Calu3 (cell line): ENCODE measurements at regions of chr3 and their contacts with region 1.

Region 1: DNA sequence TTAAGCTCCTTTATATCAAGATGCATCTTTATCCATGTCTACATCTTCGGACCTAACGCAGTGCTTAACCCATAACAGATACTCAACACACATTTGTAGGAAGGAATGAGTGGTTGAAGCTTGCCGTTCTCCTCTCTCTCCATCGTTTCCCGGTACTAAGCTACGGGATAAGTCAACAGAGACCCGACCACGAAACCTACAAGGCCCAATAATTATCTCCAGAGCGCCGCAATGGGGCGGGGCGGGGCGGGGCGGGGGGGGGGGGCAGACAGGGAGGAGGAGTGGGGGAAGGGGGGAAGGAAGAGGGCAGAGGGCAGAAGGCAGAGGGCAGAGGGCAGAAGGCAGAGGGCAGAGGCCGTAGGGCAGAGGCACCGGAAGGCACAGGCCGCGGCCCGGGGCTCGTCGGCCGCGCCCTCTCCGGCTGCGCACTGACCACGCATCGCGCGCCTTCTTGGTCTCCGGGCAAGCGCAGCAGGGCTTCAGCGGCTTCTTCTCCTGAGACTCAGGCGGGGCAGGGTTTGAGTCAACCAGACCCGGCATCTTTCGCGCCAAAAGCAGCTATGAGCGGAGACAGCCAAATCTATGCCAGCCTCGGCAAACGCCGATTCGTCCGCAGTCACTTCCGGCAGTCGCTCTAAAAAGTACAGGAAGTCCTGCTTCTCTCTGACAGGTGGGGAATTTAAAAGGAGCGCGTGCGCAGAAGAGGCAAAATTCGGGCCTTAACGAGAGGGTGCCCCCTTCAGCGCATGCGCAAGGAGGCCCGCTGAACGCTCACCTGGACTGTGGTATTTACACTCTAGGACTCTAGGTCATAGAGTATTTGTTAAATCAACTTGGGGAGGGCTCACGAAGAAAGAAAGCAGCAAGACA is at the start of gene COX17:
- DNase-seq: peak; percentile 93
- H3K4me3 Mint-ChIP-seq: peak within 1 kb of the TSS; percentile 76
- H3K27ac Mint-ChIP-seq: peak within 1 kb of the TSS; percentile 94
- H3K4me1 Mint-ChIP-seq: no peaks in the 10 kb centered on the region
- H3K27me3 Mint-ChIP-seq: no peaks in the 10 kb centered on the region
- CTCF ChIP-seq: no peak
- total RNA-seq, gene COX17: 48.4 and 51.3 TPM in 2 replicates

Region 2: DNA sequence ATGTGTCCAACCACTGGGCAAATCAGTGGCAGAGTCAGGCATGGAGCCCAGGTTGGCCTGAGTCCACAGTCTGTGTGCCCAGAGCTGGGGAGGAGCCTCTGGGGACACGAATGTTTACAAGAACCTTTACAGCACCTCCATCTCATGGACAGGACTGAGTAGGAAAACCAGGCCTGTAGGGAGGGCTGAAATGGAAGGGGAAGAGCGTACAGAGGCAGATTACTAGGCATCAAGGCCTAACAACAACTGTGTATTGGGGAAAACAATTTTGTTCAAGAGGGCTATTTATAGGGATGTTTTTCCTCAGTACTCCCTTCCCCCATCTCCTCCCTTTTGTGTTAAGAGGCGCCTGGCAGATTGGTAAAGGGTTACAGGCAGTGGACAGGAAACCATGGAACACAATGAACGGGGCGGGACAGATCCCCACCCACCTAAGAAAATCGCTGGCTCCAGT is 397.9 kb before region 1 on chr3:
- CTCF ChIA-PET with region 1: no interaction called
- intact Hi-C with region 1: loop called (anchors 1 kb)
- DNase-seq: no peak
- H3K4me3 Mint-ChIP-seq: no peak overlapping the region
- H3K27ac Mint-ChIP-seq: no peak overlapping the region
- H3K4me1 Mint-ChIP-seq: no peaks in the 10 kb centered on the region
- H3K27me3 Mint-ChIP-seq: peaks cover 14% of the 10 kb centered on the region
- CTCF ChIP-seq: no peak

Region 3: GRCh38 chr3:119463171-119464169 is 213.5 kb before region 1 on chr3 and contains the start of gene TMEM39A:
- CTCF ChIA-PET with region 1: interaction called, 3 read pairs
- intact Hi-C with region 1: loop called (anchors 10 kb)
- DNase-seq: peak; percentile 98
- H3K4me3 Mint-ChIP-seq: peak within 1 kb of the TSS; percentile 89
- H3K27ac Mint-ChIP-seq: peak within 1 kb of the TSS; percentile 98
- H3K4me1 Mint-ChIP-seq: peaks cover 15% of the 10 kb centered on the region
- H3K27me3 Mint-ChIP-seq: no peaks in the 10 kb centered on the region
- CTCF ChIP-seq: no peak
- total RNA-seq, gene TMEM39A: 48.6 and 54.3 TPM in 2 replicates

Region 4: DNA sequence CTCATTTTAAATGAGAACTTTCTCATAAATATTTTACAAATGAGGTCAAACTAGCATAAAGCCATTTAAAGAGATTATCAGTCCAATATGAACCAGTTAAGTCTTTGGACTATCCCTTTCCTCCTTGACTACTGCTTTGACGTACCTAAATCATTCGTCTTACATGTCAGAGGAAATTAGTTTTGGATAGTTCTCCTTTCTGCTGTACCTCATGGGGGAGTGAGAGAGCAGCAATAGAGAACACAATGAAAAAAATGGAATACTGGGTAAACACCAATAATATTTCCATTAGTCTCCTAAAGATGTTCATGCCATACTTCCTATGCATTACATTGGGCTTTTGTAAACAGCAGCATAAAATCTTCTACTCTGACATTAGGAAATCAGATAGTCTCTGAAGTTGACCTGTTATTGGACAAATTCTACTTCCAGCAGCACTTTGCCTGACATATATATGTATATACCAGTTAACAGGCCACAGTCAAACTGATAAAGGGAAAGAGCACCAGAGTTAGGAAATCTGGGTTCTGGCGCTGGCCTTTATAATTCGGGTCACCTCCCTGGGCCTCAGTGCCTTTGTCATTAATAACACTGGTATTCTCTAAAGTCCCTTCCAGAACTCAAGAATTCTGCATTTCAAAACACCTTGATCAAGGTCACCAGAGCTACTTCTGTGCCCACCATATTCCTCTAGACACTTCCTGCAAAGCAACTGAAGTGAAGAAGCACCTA is 151.9 kb before region 1 on chr3:
- CTCF ChIA-PET with region 1: no interaction called
- intact Hi-C with region 1: loop called (anchors 10 kb)
- DNase-seq: peak; percentile 2
- H3K4me3 Mint-ChIP-seq: no peak overlapping the region
- H3K27ac Mint-ChIP-seq: no peak overlapping the region
- H3K4me1 Mint-ChIP-seq: no peaks in the 10 kb centered on the region
- H3K27me3 Mint-ChIP-seq: no peaks in the 10 kb centered on the region
- CTCF ChIP-seq: no peak